ENCODE measurements at regions of chr17 and their contacts with region 1.

Region 1: GRCh38 chr17:4997302-4998026 is at the starts of genes INCA1 and KIF1C:
- DNase-seq: peak; percentile 77
- ATAC-seq: peak; percentile 78
- H3K4me3 ChIP-seq: peak within 1 kb of the TSS; percentile 91 to 93 (median 92)
- H3K27ac ChIP-seq: peak within 1 kb of the TSS; percentile 93
- H3K4me1 ChIP-seq: peaks cover 28% of the 10 kb centered on the region
- H3K27me3 ChIP-seq: no peaks in the 10 kb centered on the region; a peak in 1 of 5 replicates
- CTCF ChIP-seq: no peak
- EP300 ChIP-seq: no peak
- POLR2A ChIP-seq: peak; percentile 62 to 79
- RAD21 ChIP-seq: peak; percentile 23; the same call in 1 of the 2 replicates
- total RNA-seq, gene INCA1: 0.35 and 0.93 TPM in 2 replicates
- total RNA-seq, gene KIF1C: 79.0 and 104 TPM in 2 replicates

Region 2: GRCh38 chr17:4939796-4940624 is 57.5 kb before region 1 on chr17 and contains the starts of genes RNF167 and SLC25A11:
- CTCF ChIA-PET with region 1: no interaction called
- POLR2A ChIA-PET with region 1: interaction called, 21 read pairs
- in situ Hi-C with region 1: no loop called
- intact Hi-C with region 1: no loop called
- DNase-seq: peak; percentile 100
- ATAC-seq: peak; percentile 79
- H3K4me3 ChIP-seq: peak within 1 kb of the TSS; percentile 91 to 97 (median 93)
- H3K27ac ChIP-seq: peak within 1 kb of the TSS; percentile 96
- H3K4me1 ChIP-seq: peaks cover 30% of the 10 kb centered on the region
- H3K27me3 ChIP-seq: no peaks in the 10 kb centered on the region; a peak in 1 of 5 replicates
- CTCF ChIP-seq: no peak
- EP300 ChIP-seq: no peak
- POLR2A ChIP-seq: peak; percentile 67 to 90
- RAD21 ChIP-seq: peak; percentile 57
- total RNA-seq, gene RNF167: 35.7 and 44.1 TPM in 2 replicates
- total RNA-seq, gene SLC25A11: 47.2 and 47.9 TPM in 2 replicates

Region 3: GRCh38 chr17:4948931-4949320 is 48.5 kb before region 1 on chr17:
- CTCF ChIA-PET with region 1: no interaction called
- POLR2A ChIA-PET with region 1: interaction called, 11 read pairs
- in situ Hi-C with region 1: no loop called
- intact Hi-C with region 1: no loop called
- DNase-seq: peak; percentile 82
- ATAC-seq: peak; percentile 62
- H3K4me3 ChIP-seq: peak overlapping the region; percentile 70 to 100 (median 93)
- H3K27ac ChIP-seq: peak overlapping the region; percentile 99
- H3K4me1 ChIP-seq: peaks cover 59% of the 10 kb centered on the region
- H3K27me3 ChIP-seq: no peaks in the 10 kb centered on the region; a peak in 1 of 5 replicates
- CTCF ChIP-seq: no peak
- EP300 ChIP-seq: no peak
- POLR2A ChIP-seq: peak; percentile 50 to 64; a peak in 3 of 4 replicates
- RAD21 ChIP-seq: peak; percentile 30

Region 4: DNA sequence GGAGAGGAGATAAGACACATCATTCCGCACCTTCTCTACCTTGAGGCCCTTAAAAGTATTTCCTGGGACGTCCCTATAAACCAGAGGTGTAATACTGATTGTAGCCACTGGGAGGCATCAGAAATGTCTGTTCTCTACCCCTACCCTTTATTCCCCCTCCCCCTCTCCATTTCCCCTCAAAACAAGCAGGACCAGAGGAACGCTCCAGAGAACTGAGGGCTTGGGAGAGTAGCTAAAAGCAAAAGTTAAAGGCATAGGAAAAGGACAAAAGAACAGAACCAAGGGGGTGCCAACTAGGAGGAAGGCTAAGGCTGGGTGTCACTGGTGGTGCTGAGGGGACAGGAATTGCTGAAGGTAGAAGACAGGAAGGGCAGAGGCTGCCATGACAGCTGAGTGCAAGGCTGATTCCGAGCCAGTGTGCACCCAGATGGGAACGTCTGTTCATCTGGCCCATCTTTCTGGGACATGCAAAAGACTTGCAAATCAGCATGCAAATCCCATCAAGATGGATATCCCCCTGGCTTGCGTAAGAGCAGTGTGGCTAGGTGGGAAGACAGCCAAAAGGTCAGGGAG is 16.7 kb before region 1 on chr17:
- CTCF ChIA-PET with region 1: no interaction called
- POLR2A ChIA-PET with region 1: interaction called, 74 read pairs
- in situ Hi-C with region 1: no loop called
- intact Hi-C with region 1: no loop called
- DNase-seq: peak; percentile 54
- ATAC-seq: peak; percentile 63
- H3K4me3 ChIP-seq: no peak overlapping the region
- H3K27ac ChIP-seq: no peak overlapping the region
- H3K4me1 ChIP-seq: peaks cover 14% of the 10 kb centered on the region
- H3K27me3 ChIP-seq: no peaks in the 10 kb centered on the region
- CTCF ChIP-seq: peak; percentile 75
- EP300 ChIP-seq: no peak
- POLR2A ChIP-seq: no peak
- RAD21 ChIP-seq: no peak

Region 5: GRCh38 chr17:4986951-4987766 is 10.3 kb before region 1 on chr17 and contains the start of gene CAMTA2:
- CTCF ChIA-PET with region 1: no interaction called
- POLR2A ChIA-PET with region 1: interaction called, 74 read pairs
- in situ Hi-C with region 1: no loop called
- intact Hi-C with region 1: no loop called
- DNase-seq: peak; percentile 72
- ATAC-seq: peak; percentile 79
- H3K4me3 ChIP-seq: peak within 1 kb of the TSS; percentile 80 to 87 (median 84)
- H3K27ac ChIP-seq: peak within 1 kb of the TSS; percentile 55
- H3K4me1 ChIP-seq: peaks cover 30% of the 10 kb centered on the region
- H3K27me3 ChIP-seq: no peaks in the 10 kb centered on the region
- CTCF ChIP-seq: peak; percentile 87
- EP300 ChIP-seq: peak in 1 of 2 experiments; percentile 34; a peak in 2 of 4 replicates
- POLR2A ChIP-seq: peak in 1 of 2 experiments; percentile 12; a peak in 2 of 4 replicates
- RAD21 ChIP-seq: peak; percentile 85
- total RNA-seq, gene CAMTA2: 4.0 and 4.1 TPM in 2 replicates

Region 6: DNA sequence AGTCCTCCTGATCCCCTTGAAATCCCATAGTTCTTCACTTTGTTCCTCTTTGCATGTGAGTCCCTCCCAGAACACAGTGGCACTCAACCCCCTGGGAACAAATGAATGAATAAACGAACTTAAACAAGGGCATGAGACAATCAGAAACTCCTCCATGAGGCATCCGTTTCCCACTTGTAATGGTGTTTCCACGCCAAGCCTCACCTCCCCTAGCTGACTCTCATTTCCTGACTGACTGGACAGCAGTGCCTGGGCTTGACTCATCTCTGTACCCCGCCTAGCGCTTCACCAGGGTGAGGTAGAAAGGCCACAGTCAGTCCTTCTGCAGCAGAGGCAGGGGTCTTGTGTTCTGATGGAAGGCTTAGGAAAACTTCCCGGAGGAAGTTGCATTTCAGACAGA is 14.5 kb after region 1 on chr17:
- CTCF ChIA-PET with region 1: no interaction called
- POLR2A ChIA-PET with region 1: interaction called, 12 read pairs
- in situ Hi-C with region 1: no loop called
- intact Hi-C with region 1: no loop called
- DNase-seq: no peak
- ATAC-seq: no peak
- H3K4me3 ChIP-seq: no peak overlapping the region
- H3K27ac ChIP-seq: no peak overlapping the region
- H3K4me1 ChIP-seq: no peaks in the 10 kb centered on the region
- H3K27me3 ChIP-seq: no peaks in the 10 kb centered on the region
- CTCF ChIP-seq: no peak
- EP300 ChIP-seq: no peak
- POLR2A ChIP-seq: no peak
- RAD21 ChIP-seq: no peak

Region 7: GRCh38 chr17:5065227-5065744 is 67.8 kb after region 1 on chr17:
- CTCF ChIA-PET with region 1: no interaction called
- POLR2A ChIA-PET with region 1: no interaction called
- in situ Hi-C with region 1: no loop called
- intact Hi-C with region 1: no loop called
- DNase-seq: no peak
- ATAC-seq: no peak
- H3K4me3 ChIP-seq: no peak overlapping the region
- H3K27ac ChIP-seq: no peak overlapping the region
- H3K4me1 ChIP-seq: peaks cover 17% of the 10 kb centered on the region
- H3K27me3 ChIP-seq: no peaks in the 10 kb centered on the region
- CTCF ChIP-seq: no peak
- EP300 ChIP-seq: no peak
- POLR2A ChIP-seq: no peak
- RAD21 ChIP-seq: no peak

Region 8: DNA sequence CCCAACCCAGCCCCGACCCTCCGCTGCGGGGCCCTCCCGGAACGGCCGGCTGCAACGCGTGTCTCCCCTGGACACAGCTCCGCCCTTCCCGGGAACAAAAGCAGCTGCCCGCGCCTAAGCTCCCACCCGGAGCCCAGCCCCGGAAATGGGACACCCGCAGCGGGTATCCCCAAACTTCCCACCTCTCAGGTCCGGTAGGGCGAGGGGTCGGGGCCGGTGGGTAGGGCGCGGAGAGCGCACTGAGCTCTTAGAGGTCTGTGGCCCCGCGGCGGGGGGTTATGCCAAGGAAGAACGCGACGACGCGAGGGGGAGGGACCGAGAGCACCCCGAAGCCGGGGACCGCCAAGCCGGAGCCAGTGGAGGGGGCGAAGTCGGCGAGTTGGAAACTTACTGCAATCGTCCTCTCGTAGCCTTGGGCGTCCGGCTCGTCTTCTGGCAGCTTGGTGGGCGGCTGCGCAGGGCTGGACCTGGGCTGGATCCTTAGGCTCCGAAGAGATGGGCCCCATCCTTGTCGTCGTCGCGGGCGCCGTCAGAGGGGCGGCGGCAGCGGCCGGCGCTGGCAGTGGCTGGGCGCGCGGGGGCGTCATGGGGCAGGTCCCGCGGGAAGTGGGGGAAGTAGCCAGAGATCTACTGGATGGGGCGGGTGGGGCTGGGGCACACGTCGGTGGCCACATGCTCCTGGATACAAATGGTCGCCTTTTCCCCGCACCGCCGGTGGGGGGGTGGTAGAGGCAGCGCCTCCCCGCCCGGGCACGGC is 125.3 kb after region 1 on chr17:
- CTCF ChIA-PET with region 1: no interaction called
- POLR2A ChIA-PET with region 1: no interaction called
- in situ Hi-C with region 1: no loop called
- intact Hi-C with region 1: no loop called
- DNase-seq: no peak
- ATAC-seq: no peak; the same call in 2 of the 3 replicates
- H3K4me3 ChIP-seq: no peak overlapping the region
- H3K27ac ChIP-seq: no peak overlapping the region
- H3K4me1 ChIP-seq: peaks cover 14% of the 10 kb centered on the region
- H3K27me3 ChIP-seq: peaks cover 0 to 3% of the 10 kb centered on the region in 2 experiments; a peak in 2 of 5 replicates
- CTCF ChIP-seq: no peak
- EP300 ChIP-seq: no peak
- POLR2A ChIP-seq: no peak
- RAD21 ChIP-seq: no peak